Ovary (tissue), 10 donors: ENCODE measurements at regions of chr1 and their contacts with region 1.

Region 1: DNA sequence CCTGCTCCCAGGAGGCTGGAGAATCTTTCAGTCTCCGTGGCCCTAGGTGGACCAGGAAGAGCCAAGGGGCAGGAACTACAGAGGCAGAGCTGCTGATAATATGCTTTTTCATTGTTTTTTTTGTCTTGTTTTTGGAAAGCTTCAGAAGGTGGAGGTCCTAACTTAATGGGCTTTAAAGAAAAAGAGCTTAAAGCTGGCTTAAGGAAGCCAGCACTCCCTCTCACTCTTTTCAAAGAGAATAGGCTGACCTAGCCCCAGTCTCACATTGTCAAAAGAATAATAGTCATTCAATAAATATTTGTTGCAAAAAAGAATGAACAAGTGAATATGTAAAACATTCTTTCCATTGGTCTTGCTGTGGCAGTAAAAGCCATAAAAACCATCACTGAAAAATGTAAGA is 61.0 kb upstream of the RRP15 start:
- DNase-seq: no peak
- H3K4me3 ChIP-seq: no peak overlapping the region
- H3K27ac ChIP-seq: no peak overlapping the region
- H3K4me1 ChIP-seq: no peaks in the 10 kb centered on the region
- H3K27me3 ChIP-seq: no peaks in the 10 kb centered on the region
- CTCF ChIP-seq: no peak
- EP300 ChIP-seq: no peak
- POLR2A ChIP-seq: no peak

Region 2: DNA sequence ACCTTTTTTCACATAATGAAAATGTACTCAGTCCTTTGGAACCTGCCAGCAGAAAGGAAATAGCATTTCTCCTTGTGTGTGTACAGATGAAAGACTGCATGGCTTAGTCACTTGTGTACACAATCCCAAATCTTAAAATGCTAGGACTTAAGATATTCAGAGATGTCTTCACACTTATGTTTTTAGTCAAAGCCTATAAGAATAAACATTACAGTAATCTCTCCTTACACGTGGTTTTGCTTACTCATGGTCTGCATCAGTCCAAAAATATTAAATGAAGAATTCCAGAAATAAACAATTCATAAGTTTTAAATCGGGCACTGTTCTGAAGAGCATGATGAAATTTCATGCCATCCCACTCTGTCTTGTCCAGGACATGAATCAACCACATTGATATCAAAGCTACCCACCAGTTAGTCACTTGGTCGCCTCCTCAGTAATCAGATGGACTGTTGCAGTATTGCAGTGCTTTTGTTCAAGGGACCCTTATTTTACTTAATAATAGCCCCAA is 14.7 kb before region 1 on chr1:
- intact Hi-C with region 1: loop called in 1 of 4 experiments (anchors 2 kb)
- DNase-seq: no peak
- H3K4me3 ChIP-seq: no peak overlapping the region
- H3K27ac ChIP-seq: no peak overlapping the region
- H3K4me1 ChIP-seq: no peaks in the 10 kb centered on the region
- H3K27me3 ChIP-seq: no peaks in the 10 kb centered on the region
- CTCF ChIP-seq: no peak
- EP300 ChIP-seq: no peak
- POLR2A ChIP-seq: no peak

Region 3: DNA sequence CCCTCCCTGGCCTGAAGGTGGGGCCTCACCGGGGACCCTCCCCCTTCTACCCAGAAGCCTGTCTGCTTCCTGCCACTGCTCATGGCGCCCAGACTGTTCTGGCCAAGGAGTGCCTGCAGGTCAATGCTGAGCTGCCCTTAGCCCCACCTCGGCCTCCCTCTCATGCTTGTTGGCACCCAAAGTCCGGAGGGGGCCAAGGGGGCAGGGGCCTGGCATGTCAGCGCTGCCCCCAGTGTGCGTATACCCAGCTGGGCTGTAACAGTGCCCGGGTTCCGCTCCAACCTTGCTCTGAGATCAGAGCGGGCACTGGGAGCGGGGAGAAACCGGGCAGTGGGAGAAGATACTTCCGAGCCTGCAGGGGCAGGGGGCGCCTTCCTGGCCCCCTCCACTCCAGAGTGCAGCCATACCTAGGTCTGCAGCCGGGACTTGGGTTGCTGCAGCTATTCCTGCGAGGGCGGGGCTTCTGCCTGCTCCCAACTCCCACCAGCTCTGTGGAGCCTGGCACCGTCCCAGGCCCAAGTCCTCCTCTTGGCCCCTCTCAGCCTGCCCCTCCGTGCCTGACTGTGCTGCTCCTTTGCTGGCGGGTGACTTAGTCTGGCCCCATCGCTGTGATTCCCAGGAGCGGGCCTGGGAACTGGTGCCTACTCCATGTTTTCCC is 99.6 kb after region 1 on chr1:
- intact Hi-C with region 1: no loop called
- DNase-seq: peak in 1 of 5 donors; percentile 15
- H3K4me3 ChIP-seq: no peak overlapping the region
- H3K27ac ChIP-seq: no peak overlapping the region
- H3K4me1 ChIP-seq: no peaks in the 10 kb centered on the region
- H3K27me3 ChIP-seq: no peaks in the 10 kb centered on the region
- CTCF ChIP-seq: no peak
- EP300 ChIP-seq: no peak
- POLR2A ChIP-seq: no peak